Activated B cell treated with CpG ODN at 0.5 μM for 24 hours (primary cell): ENCODE measurements at regions of chr1 and their contacts with region 1.

Region 1: GRCh38 chr1:171313835-171314320 is at the start of gene FMO4:
- DNase-seq: peak; percentile 36
- ATAC-seq: peak; percentile 99
- H3K4me3 Mint-ChIP-seq: peak within 1 kb of the TSS; percentile 76
- H3K27ac Mint-ChIP-seq: peak within 1 kb of the TSS; percentile 88
- H3K4me1 Mint-ChIP-seq: peaks cover 21% of the 10 kb centered on the region
- H3K27me3 Mint-ChIP-seq: no peaks in the 10 kb centered on the region
- CTCF ChIP-seq: peak; percentile 22
- total RNA-seq, gene FMO4: 3.0 and 3.4 TPM in 2 replicates

Region 2: DNA sequence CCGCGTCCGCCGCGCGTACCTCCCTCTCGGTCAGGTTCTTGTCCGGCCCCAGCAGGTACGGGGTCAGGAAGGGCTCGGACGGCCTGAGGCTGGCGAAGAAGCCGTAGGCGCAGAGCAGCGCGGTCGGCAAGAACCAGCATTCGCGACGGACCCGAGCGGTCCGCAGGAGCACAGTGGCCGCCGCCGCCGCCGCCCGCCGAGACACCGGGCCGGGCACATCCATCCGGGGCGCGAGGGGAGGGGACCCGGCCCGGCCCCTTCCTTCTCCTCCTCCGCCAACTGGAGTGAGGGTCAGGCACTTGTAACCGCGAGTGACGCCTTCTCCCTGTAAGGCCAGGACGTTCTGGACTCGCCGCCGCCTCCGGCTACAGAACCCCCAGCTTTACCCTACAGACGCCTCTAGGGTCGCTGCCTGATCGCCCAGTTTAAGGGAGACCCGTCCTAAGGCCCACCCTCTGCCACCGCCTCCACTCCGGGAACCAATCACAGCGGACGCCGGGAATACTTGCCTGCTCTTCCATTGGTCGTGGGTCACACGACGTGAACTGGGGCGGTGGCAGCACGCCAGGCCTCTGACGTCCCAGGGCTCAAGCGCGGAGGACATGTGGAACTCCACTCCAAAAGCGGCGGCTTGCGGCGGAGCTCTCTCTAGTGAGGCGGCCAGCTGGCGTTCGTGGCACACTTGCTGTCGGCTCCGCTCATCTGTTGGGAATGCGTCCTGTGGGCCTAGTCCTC is 1828.2 kb before region 1 on chr1 and contains the start of gene SLC19A2:
- CTCF ChIA-PET with region 1: no interaction called
- POLR2A ChIA-PET with region 1: no interaction called
- intact Hi-C with region 1: loop called (anchors 5 kb)
- DNase-seq: peak; percentile 86
- ATAC-seq: peak; percentile 98
- H3K4me3 Mint-ChIP-seq: peak within 1 kb of the TSS; percentile 88
- H3K27ac Mint-ChIP-seq: peak within 1 kb of the TSS; percentile 82
- H3K4me1 Mint-ChIP-seq: peaks cover 27% of the 10 kb centered on the region
- H3K27me3 Mint-ChIP-seq: no peaks in the 10 kb centered on the region
- CTCF ChIP-seq: no peak
- total RNA-seq, gene SLC19A2: 3.0 and 3.6 TPM in 2 replicates

Region 3: DNA sequence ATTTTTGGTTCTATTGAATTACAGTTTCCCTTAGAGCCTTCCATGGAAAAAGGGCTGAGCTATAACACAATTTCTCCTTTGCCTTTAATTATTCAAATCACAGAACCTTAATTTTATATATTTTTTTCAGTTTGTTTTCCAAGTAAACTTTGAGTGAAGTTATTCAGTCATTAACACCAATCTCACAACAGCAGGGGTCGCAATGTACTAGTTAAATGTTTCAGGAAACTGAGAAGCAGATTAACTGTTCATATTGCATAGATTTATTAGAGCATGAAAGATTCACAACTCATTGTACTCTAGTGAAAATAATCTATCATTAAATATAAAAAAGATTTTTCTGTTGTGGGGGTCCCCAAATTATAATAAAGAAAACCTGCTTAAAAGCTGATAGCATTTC is 1303.4 kb before region 1 on chr1:
- CTCF ChIA-PET with region 1: interaction called, 3 read pairs
- POLR2A ChIA-PET with region 1: no interaction called
- intact Hi-C with region 1: loop called (anchors 5 kb)
- DNase-seq: no peak
- ATAC-seq: no peak
- H3K4me3 Mint-ChIP-seq: no peak overlapping the region
- H3K27ac Mint-ChIP-seq: no peak overlapping the region
- H3K4me1 Mint-ChIP-seq: no peaks in the 10 kb centered on the region
- H3K27me3 Mint-ChIP-seq: no peaks in the 10 kb centered on the region
- CTCF ChIP-seq: no peak

Region 4: GRCh38 chr1:170687621-170688020 is 626.3 kb before region 1 on chr1:
- CTCF ChIA-PET with region 1: interaction called, 28 read pairs
- POLR2A ChIA-PET with region 1: no interaction called
- intact Hi-C with region 1: loop called (anchors 1 kb)
- DNase-seq: no peak
- ATAC-seq: no peak
- H3K4me3 Mint-ChIP-seq: no peak overlapping the region
- H3K27ac Mint-ChIP-seq: no peak overlapping the region
- H3K4me1 Mint-ChIP-seq: no peaks in the 10 kb centered on the region
- H3K27me3 Mint-ChIP-seq: peaks cover 15% of the 10 kb centered on the region
- CTCF ChIP-seq: no peak

Region 5: DNA sequence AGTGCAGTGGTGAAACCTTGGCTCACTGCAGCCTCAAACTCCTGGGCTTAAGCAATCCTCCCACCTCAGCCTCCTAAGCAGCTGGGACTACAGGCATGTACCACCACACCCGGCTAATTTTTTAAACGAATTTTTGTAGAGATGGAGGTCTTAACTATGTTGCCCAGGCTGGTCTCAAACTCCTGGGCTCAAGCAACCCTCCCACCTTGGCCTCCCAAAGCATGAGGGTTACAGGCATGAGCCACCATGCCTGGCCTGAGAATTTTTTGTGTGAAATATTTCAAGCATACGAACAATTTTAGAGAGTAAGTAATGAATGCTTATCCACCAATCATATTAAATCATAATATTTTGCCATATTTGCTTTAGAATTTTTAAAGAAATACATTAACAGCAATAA is 327.0 kb before region 1 on chr1:
- CTCF ChIA-PET with region 1: no interaction called
- POLR2A ChIA-PET with region 1: no interaction called
- intact Hi-C with region 1: no loop called
- DNase-seq: no peak
- ATAC-seq: no peak
- H3K4me3 Mint-ChIP-seq: no peak overlapping the region
- H3K27ac Mint-ChIP-seq: no peak overlapping the region
- H3K4me1 Mint-ChIP-seq: no peaks in the 10 kb centered on the region
- H3K27me3 Mint-ChIP-seq: no peaks in the 10 kb centered on the region
- CTCF ChIP-seq: no peak

Region 6: DNA sequence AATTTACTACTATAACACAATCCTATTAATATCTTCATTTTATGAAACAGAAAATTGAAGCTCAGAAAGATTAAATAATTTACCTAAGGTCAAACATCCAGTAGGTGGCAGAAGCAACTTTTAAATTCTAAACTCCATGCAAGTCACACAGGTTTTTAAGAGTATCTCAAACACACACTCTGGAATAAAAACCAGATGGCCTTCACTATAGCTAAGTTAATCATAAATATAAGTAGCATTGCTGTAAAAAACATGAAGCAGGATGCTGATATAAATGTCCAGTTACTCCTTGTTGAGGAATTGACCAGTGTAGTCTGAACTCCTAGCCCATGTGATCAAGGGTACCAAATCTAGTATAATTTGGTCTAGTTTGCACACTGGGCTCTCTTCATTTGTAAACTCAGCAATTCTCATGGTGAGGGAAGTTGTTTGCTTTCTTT is 232.5 kb before region 1 on chr1:
- CTCF ChIA-PET with region 1: interaction called, 18 read pairs
- POLR2A ChIA-PET with region 1: no interaction called
- intact Hi-C with region 1: loop called (anchors 1 kb)
- DNase-seq: no peak
- ATAC-seq: no peak
- H3K4me3 Mint-ChIP-seq: no peak overlapping the region
- H3K27ac Mint-ChIP-seq: no peak overlapping the region
- H3K4me1 Mint-ChIP-seq: no peaks in the 10 kb centered on the region
- H3K27me3 Mint-ChIP-seq: no peaks in the 10 kb centered on the region
- CTCF ChIP-seq: no peak

Region 7: GRCh38 chr1:171279678-171280077 is 34.2 kb before region 1 on chr1:
- CTCF ChIA-PET with region 1: interaction called, 7 read pairs
- POLR2A ChIA-PET with region 1: no interaction called
- intact Hi-C with region 1: loop called (anchors 1 kb)
- DNase-seq: no peak
- ATAC-seq: peak; percentile 42
- H3K4me3 Mint-ChIP-seq: peak overlapping the region; percentile 61
- H3K27ac Mint-ChIP-seq: peak overlapping the region; percentile 77
- H3K4me1 Mint-ChIP-seq: peaks cover 42% of the 10 kb centered on the region
- H3K27me3 Mint-ChIP-seq: peaks cover 2% of the 10 kb centered on the region
- CTCF ChIP-seq: no peak